GM18951 (cell line): ENCODE measurements at regions of chr3 and their contacts with region 1.

Region 1: DNA sequence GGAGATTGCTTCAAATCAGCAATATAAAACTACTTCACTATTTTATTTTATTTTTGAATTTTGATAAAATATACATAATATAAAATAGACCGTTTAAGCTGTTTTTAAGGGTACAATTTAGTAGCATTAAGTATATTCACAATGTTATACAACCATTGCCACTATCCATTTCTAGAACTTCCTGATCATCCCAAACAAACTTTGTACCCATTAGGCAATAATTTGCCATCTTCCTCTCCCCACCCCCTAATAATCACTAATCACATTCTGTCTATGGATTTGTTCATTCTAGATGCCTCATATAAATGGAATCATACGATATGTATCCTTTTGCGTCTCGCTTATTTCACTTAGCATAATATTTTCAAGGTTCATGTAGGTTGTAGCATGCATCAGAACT is 28.9 kb downstream of the FANCD2 start:
- POLR2A ChIP-seq: no peak

Region 2: GRCh38 chr3:9669720-9670432 is 385.2 kb before region 1 on chr3:
- in situ Hi-C with region 1: no loop called
- POLR2A ChIP-seq: no peak

Region 3: GRCh38 chr3:10417849-10418248 is 362.8 kb after region 1 on chr3:
- in situ Hi-C with region 1: no loop called
- POLR2A ChIP-seq: no peak

Region 4: DNA sequence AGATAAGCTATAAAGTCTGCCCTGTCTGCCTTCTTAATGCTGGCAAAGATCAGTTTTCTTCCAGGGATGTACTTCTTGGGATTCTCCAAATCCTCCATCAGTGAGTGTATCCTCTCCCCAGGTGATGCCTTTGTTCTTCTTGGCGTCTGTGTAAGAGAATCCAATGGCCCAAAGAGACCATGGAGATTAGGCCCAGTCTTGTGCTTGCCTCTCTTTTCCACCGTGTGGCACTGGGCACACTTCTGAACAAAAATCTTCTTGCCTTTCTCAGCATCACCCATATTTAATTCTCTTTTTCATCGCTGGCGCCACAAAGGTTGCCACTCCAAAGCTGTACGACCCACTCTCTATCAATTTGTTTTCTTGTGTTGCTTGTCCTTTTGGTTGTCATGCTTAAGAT is 1823.7 kb after region 1 on chr3:
- in situ Hi-C with region 1: loop called (anchors 5 kb)
- POLR2A ChIP-seq: no peak